Left cardiac atrium (tissue), 4 donors: ENCODE measurements at regions of chr5 and their contacts with region 1.

Region 1: GRCh38 chr5:34743878-34744277 is 87.8 kb downstream of the RAI14 start:
- DNase-seq: no peak
- ATAC-seq: peak; percentile 16 to 59

Region 2: DNA sequence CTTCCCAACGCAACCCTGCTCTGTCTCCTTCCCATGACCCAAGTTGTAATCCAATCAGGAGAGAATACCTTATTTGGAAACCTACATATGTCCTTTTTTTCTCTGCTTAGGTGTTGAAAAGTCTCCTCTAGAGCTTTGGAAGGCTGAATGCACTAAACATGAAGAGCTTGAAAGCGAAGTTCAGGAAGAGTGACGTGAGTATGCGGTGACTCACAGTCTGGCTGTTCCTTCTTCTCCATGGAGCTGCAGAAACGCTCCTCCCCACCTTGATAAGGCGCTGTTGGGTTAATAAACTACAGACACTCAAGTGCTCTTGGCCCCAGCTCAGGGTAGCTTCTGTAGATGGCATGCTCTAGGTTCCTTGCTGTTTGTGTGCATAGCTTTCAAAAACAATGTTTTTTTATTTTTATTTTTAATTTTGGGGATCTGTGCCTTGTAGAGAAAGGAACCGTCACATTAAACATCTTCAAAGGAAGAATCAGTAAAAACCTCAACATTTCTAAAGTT is 57.1 kb before region 1 on chr5:
- intact Hi-C with region 1: loop called in 1 of 2 experiments (anchors 10 kb)
- DNase-seq: peak; percentile 89
- ATAC-seq: peak; percentile 91 to 96

Region 3: DNA sequence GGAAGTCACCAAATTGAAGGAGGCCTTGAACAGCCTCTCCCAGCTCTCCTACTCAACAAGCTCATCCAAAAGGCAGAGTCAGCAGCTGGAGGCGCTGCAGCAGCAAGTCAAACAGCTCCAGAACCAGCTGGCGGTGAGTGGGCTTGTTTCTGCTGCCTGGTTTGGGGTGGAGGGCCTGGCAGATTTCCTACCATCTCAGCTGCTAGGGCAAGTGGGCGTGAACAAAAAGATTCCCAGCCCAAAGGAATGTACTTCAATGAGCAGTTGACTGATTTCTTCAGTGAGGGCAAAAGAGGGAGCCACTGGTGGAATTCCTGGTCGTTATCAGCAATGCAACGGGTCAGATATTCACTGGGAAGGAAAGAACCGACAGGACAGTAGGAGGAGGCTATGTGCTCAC is 82.5 kb after region 1 on chr5:
- intact Hi-C with region 1: no loop called
- DNase-seq: no peak
- ATAC-seq: no peak